Mammary epithelial cell (primary cell): ENCODE measurements at regions of chr17 and their contacts with region 1.

Region 1: GRCh38 chr17:56679115-56679766 is 85.7 kb downstream of the NOG start:
- DNase-seq: peak; percentile 34
- H3K4me3 ChIP-seq: no peak overlapping the region
- H3K27ac ChIP-seq: peak overlapping the region; percentile 89
- H3K4me1 ChIP-seq: peaks cover 74% of the 10 kb centered on the region
- H3K27me3 ChIP-seq: no peaks in the 10 kb centered on the region
- CTCF ChIP-seq: peak; percentile 54 to 64

Region 2: GRCh38 chr17:56641894-56642293 is 37.3 kb before region 1 on chr17:
- CTCF ChIA-PET with region 1: no interaction called
- dilution Hi-C with region 1: no loop called
- in situ Hi-C with region 1: no loop called
- intact Hi-C with region 1: no loop called
- DNase-seq: no peak
- H3K4me3 ChIP-seq: no peak overlapping the region
- H3K27ac ChIP-seq: no peak overlapping the region
- H3K4me1 ChIP-seq: no peaks in the 10 kb centered on the region
- H3K27me3 ChIP-seq: peaks cover 2% of the 10 kb centered on the region
- CTCF ChIP-seq: no peak

Region 3: GRCh38 chr17:56699186-56699895 is 20.1 kb after region 1 on chr17:
- CTCF ChIA-PET with region 1: interaction called, 4 read pairs
- dilution Hi-C with region 1: no loop called
- in situ Hi-C with region 1: no loop called
- intact Hi-C with region 1: loop called (anchors 1 kb)
- DNase-seq: peak; percentile 99
- H3K4me3 ChIP-seq: no peak overlapping the region
- H3K27ac ChIP-seq: peak overlapping the region; percentile 31
- H3K4me1 ChIP-seq: peaks cover 21% of the 10 kb centered on the region
- H3K27me3 ChIP-seq: no peaks in the 10 kb centered on the region
- CTCF ChIP-seq: no peak

Region 4: DNA sequence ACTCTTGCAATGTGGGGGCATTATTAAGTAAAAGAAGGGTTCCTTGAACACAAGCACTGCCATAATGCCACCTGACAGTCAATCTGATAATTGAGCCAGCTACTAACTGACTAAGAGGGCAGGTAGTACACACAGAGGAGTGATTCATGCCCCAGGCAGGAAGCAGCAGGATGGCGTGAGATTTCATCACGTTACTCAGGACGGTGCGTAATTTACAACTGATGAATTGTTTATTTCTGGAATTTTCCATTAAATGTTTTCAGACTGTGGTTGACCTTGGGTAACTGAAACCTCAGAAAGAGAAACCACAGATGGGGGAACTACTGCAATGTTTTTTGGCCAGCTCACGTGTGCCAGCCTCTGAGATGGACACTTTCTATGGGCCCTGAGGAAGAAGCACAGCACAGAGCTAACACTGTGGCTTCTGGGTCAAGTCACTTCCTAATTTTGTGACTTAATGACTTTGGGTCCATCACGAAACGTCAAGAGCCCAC is 107.8 kb after region 1 on chr17:
- CTCF ChIA-PET with region 1: no interaction called
- dilution Hi-C with region 1: no loop called
- in situ Hi-C with region 1: no loop called
- intact Hi-C with region 1: loop called (anchors 2 kb)
- DNase-seq: peak; percentile 99
- H3K4me3 ChIP-seq: no peak overlapping the region
- H3K27ac ChIP-seq: peak overlapping the region; percentile 79
- H3K4me1 ChIP-seq: peaks cover 36% of the 10 kb centered on the region
- H3K27me3 ChIP-seq: no peaks in the 10 kb centered on the region
- CTCF ChIP-seq: no peak